ENCODE measurements at regions of chr11 and their contacts with region 1.

Region 1: DNA sequence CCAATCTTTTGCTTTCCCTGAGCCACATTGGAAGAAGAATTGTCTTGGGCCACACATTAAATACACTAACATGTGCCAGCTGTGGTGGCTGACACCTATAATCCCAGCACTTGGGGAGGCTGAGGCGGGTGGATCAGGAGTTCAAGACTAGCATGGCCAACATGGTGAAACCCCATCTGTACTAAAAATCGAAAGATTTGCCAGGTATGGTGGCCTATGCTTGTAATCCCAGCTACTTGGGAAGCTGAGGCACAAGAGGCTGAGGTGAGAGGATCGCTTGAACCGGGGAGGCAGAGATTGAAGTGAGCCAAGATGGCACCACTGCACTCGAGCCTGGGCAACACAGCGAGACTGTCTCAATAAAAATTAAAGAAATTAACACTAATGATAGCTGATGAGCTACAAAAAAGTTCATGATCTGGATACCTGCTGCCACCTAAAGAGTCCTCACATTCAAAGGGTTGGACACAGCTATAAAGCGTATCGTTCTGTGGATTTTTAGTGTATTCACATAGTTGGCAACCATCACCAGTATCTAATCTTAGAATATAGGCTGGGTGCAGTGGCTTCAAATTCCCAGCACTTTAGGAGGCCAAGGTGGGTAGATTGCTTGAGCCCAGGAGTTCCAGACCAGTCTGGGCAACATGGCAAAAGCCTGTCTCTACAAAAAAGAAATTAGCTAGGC is 3.4 kb upstream of the LDHC start:
- DNase-seq: peak in 1 of 4 experiments; percentile 31
- ATAC-seq: peak; percentile 46
- H3K4me3 ChIP-seq: no peak overlapping the region
- H3K27ac ChIP-seq: peak overlapping the region; percentile 11; the same call in 1 of the 3 replicates
- H3K4me1 ChIP-seq: peaks cover 0 to 4% of the 10 kb centered on the region in 2 experiments; a peak in 1 of 5 replicates
- H3K27me3 ChIP-seq: no peaks in the 10 kb centered on the region
- CTCF ChIP-seq: no peak
- EP300 ChIP-seq: no peak
- POLR2A ChIP-seq: peak; percentile 67; the same call in 1 of the 2 replicates
- RAD21 ChIP-seq: no peak

Region 2: DNA sequence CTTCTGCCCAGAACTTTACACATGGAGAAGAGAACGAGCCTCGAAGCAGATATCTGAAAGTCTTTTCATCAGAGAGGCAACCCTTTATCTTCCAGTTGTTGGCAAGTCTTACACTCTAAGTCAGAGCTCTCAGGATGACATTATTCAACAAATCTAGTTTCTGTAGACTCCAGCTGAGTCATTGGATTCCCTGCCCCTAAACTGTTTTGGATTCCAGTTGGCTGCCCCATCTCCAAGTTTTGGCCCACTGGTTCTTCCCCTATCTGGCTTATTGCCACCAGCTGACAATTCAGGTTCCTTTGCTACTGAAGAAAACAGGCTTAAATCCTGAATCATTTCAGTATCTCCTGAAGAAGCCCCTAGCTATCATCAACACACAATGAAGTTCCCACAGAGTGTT is 317.0 kb before region 1 on chr11:
- CTCF ChIA-PET with region 1: no interaction called
- POLR2A ChIA-PET with region 1: no interaction called
- in situ Hi-C with region 1: no loop called
- intact Hi-C with region 1: no loop called
- DNase-seq: no peak
- ATAC-seq: no peak
- H3K4me3 ChIP-seq: no peak overlapping the region
- H3K27ac ChIP-seq: no peak overlapping the region
- H3K4me1 ChIP-seq: no peaks in the 10 kb centered on the region; a peak in 1 of 5 replicates
- H3K27me3 ChIP-seq: no peaks in the 10 kb centered on the region
- CTCF ChIP-seq: no peak
- EP300 ChIP-seq: no peak
- POLR2A ChIP-seq: no peak
- RAD21 ChIP-seq: no peak

Region 3: DNA sequence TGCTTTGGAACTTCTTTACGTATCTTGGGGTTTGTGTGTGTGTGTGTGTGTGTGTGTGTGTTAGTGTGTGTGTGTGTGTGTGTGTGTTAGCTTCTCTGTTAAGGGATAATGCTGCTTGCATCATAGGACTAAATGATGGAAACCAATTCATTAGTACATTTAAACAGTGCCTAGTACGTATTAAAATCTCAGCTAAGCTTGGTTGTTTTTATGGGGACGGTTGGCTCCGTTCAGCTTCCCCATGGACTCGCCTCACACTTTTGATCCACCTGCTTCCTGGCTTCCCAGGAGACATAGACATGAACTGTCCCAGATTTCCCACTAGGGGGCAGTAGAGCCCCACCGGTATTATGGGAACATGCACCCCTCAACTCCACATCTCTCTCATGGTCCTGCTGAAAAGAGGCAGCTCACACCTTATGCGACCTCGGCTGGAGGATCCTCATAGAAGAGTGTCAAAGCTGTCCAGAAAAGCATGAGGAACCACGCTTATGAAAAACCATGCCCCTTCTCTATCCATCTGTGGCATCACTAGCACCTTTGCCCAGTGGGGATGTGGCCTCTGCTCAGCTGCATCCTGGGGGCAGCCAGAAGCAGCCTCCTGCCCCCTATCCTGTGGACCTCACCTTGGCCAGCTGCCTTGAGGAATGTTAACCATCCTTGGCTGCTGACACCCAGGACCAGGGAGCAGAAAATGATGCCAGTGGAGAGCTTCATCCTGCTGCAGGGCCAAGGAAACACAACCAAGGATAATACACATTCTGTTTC is 293.2 kb before region 1 on chr11:
- CTCF ChIA-PET with region 1: no interaction called
- POLR2A ChIA-PET with region 1: no interaction called
- in situ Hi-C with region 1: no loop called
- intact Hi-C with region 1: loop called (anchors 5 kb)
- DNase-seq: peak; percentile 77 to 80 (median 77)
- ATAC-seq: peak; percentile 98
- H3K4me3 ChIP-seq: no peak overlapping the region
- H3K27ac ChIP-seq: no peak overlapping the region
- H3K4me1 ChIP-seq: no peaks in the 10 kb centered on the region
- H3K27me3 ChIP-seq: peaks cover 11 to 17% of the 10 kb centered on the region in 2 experiments; a peak in 4 of 5 replicates
- CTCF ChIP-seq: peak; percentile 83 to 87 (median 84)
- EP300 ChIP-seq: no peak
- POLR2A ChIP-seq: no peak
- RAD21 ChIP-seq: peak; percentile 63 to 83

Region 4: DNA sequence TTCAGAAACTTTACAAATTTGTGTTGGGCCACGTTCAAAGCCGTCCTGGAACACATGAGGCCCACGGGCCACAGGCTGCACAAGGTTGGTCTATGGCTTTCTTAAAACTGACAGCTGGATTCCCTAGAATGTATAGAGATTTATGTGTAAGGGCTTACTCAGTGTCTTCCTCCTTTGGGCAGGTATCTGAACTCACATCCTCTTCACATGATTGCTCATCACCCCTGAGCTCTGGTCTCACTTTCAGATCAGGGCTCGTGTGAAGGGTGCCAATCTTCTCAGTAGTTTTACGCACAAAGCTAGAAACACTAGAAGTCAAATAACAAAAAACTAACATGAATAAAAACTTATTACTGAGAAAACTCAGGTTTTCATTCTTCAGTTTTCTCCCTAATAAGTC is 113.8 kb before region 1 on chr11:
- CTCF ChIA-PET with region 1: no interaction called
- POLR2A ChIA-PET with region 1: no interaction called
- in situ Hi-C with region 1: no loop called
- intact Hi-C with region 1: no loop called
- DNase-seq: no peak
- ATAC-seq: no peak
- H3K4me3 ChIP-seq: no peak overlapping the region
- H3K27ac ChIP-seq: no peak overlapping the region
- H3K4me1 ChIP-seq: no peaks in the 10 kb centered on the region
- H3K27me3 ChIP-seq: no peaks in the 10 kb centered on the region
- CTCF ChIP-seq: no peak
- EP300 ChIP-seq: no peak
- POLR2A ChIP-seq: no peak
- RAD21 ChIP-seq: no peak

Region 5: DNA sequence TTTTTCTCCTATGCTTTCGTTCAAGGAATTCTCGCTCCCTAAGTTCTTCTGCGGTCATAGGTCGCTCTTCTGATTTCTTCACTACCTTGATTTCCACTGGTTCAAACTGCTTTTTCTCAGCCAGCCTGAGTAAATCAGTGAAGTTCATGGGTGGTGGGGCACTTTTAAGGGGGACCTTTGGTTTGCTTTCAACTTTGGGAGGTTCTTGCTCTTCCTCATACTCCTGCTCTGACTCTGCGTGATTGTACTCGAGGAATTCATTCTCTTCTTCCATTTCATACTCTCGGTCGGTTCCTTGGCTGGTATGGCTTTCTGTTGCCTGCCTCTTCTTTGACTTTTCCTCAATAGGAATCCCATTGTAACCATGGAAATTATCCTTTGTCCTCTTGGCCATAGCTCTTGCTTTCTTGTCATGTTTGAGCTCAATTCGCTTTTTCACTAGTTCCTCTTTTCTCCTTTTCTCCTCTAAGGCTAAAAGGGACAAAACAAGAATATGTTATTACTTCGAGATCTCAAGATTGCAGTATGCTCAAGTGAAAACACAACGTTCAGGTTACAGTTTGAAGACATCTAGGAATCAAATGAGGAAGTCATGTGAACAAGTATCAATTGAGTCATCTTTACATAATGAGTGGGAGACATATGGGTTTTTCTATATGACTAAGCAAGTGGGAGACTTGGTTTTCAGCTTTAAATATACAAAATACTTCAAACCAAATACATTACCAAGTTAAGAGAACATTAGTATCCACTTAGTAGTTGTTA is 207.1 kb after region 1 on chr11:
- CTCF ChIA-PET with region 1: no interaction called
- POLR2A ChIA-PET with region 1: no interaction called
- in situ Hi-C with region 1: no loop called
- intact Hi-C with region 1: no loop called
- DNase-seq: peak in 1 of 4 experiments; percentile 14
- ATAC-seq: peak; percentile 55
- H3K4me3 ChIP-seq: no peak overlapping the region
- H3K27ac ChIP-seq: peak overlapping the region; percentile 72; the same call in 2 of the 3 replicates
- H3K4me1 ChIP-seq: peaks cover 5 to 11% of the 10 kb centered on the region in 2 experiments; a peak in 4 of 5 replicates
- H3K27me3 ChIP-seq: no peaks in the 10 kb centered on the region
- CTCF ChIP-seq: no peak
- EP300 ChIP-seq: peak; percentile 39; the same call in 1 of the 2 replicates
- POLR2A ChIP-seq: no peak
- RAD21 ChIP-seq: no peak